T-cell (primary cell): ENCODE measurements at regions of chr18 and their contacts with region 1.

Region 1: DNA sequence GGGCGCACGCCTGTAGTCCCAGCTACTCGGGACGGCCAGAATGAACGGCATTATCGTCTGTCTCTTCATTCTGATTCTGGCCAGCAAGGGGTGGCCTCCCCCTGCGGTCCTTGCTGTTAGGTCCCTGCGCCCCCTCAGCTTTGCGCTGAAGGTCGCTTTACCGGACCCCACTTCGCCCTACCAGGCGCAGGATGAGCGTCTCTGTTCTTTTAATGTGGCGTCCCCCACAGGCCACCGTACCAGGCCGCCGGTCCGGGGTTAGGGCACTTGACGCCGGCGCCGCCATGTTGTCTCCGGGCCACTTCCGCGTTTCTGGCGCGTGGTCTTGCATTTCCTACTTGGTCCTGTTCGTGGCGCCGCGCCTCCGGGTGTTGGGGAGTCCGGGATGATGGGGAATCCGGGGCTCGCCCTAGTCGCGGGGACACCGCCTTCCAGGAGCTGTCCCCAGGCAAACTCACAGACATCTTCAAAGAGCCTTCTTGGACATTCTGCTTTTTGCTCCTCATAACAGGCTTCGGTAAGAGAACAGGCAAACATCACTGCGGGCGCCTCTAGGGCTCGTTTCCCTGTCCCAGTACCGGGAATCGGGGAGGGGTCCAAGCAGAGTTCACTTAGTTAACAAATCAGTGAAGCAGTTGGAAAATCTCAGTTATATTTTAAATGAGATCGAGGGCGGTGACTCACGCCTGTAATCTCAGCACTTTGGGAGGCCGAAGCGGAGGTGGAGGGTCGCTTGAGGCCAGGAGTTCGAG is 8.5 kb upstream of the NARS1 start:
- DNase-seq: peak; percentile 84 to 96 (median 93)
- ATAC-seq: peak; percentile 97 to 99 (median 98)
- H3K4me3 ChIP-seq: peak overlapping the region; percentile 92 to 96
- H3K4me3 Mint-ChIP-seq: peak overlapping the region; percentile 94 to 98 (median 97)
- H3K27ac ChIP-seq: peak overlapping the region; percentile 67
- H3K27ac Mint-ChIP-seq: peak overlapping the region; percentile 96 to 97
- H3K4me1 ChIP-seq: peaks cover 3 to 20% of the 10 kb centered on the region in 2 experiments
- H3K4me1 Mint-ChIP-seq: peaks cover 20 to 23% (median 21%) of the 10 kb centered on the region in 3 donors
- H3K27me3 ChIP-seq: no peaks in the 10 kb centered on the region
- H3K27me3 Mint-ChIP-seq: no peaks in the 10 kb centered on the region

Region 2: GRCh38 chr18:57941841-57942489 is 311.8 kb after region 1 on chr18:
- CTCF ChIA-PET with region 1: interaction called in 1 of 2 experiments, 10 read pairs
- POLR2A ChIA-PET with region 1: no interaction called
- DNase-seq: no peak
- ATAC-seq: no peak
- H3K4me3 ChIP-seq: no peak overlapping the region
- H3K4me3 Mint-ChIP-seq: no peak overlapping the region
- H3K27ac ChIP-seq: no peak overlapping the region
- H3K27ac Mint-ChIP-seq: no peak overlapping the region
- H3K4me1 ChIP-seq: no peaks in the 10 kb centered on the region
- H3K4me1 Mint-ChIP-seq: no peaks in the 10 kb centered on the region
- H3K27me3 ChIP-seq: peaks cover 0 to 7% of the 10 kb centered on the region in 2 experiments
- H3K27me3 Mint-ChIP-seq: peaks cover 31 to 36% of the 10 kb centered on the region in 2 donors